CD4-positive, alpha-beta T cell (primary cell): ENCODE measurements at regions of chr15 and their contacts with region 1.

Region 1: GRCh38 chr15:38474155-38474757 is 20.3 kb downstream of the FAM98B start:
- DNase-seq: peak in 10 of 14 experiments; percentile 6 to 85 (median 30)
- ATAC-seq: peak; percentile 100
- H3K4me3 ChIP-seq: no peak overlapping the region
- H3K4me3 Mint-ChIP-seq: no peak overlapping the region
- H3K27ac ChIP-seq: no peak overlapping the region
- H3K27ac Mint-ChIP-seq: peak overlapping the region; percentile 61
- H3K4me1 ChIP-seq: no peaks in the 10 kb centered on the region
- H3K4me1 Mint-ChIP-seq: peaks cover 5% of the 10 kb centered on the region
- H3K27me3 ChIP-seq: no peaks in the 10 kb centered on the region
- H3K27me3 Mint-ChIP-seq: no peaks in the 10 kb centered on the region
- CTCF ChIP-seq: peak; percentile 82

Region 2: GRCh38 chr15:38207621-38208020 is 266.6 kb before region 1 on chr15:
- CTCF ChIA-PET with region 1: no interaction called
- POLR2A ChIA-PET with region 1: no interaction called
- intact Hi-C with region 1: no loop called
- DNase-seq: no peak
- ATAC-seq: no peak
- H3K4me3 ChIP-seq: no peak overlapping the region
- H3K4me3 Mint-ChIP-seq: no peak overlapping the region
- H3K27ac ChIP-seq: no peak overlapping the region
- H3K27ac Mint-ChIP-seq: no peak overlapping the region
- H3K4me1 ChIP-seq: no peaks in the 10 kb centered on the region
- H3K4me1 Mint-ChIP-seq: no peaks in the 10 kb centered on the region
- H3K27me3 ChIP-seq: peaks cover 0 to 4% of the 10 kb centered on the region in 2 experiments
- H3K27me3 Mint-ChIP-seq: peaks cover 56% of the 10 kb centered on the region
- CTCF ChIP-seq: no peak

Region 3: GRCh38 chr15:38853608-38854007 is 379.4 kb after region 1 on chr15:
- CTCF ChIA-PET with region 1: no interaction called
- POLR2A ChIA-PET with region 1: no interaction called
- intact Hi-C with region 1: loop called in 1 of 2 experiments (anchors 10 kb)
- DNase-seq: peak in 13 of 14 experiments; percentile 5 to 48 (median 16)
- ATAC-seq: no peak
- H3K4me3 ChIP-seq: no peak overlapping the region
- H3K4me3 Mint-ChIP-seq: no peak overlapping the region
- H3K27ac ChIP-seq: no peak overlapping the region
- H3K27ac Mint-ChIP-seq: no peak overlapping the region
- H3K4me1 ChIP-seq: no peaks in the 10 kb centered on the region
- H3K4me1 Mint-ChIP-seq: no peaks in the 10 kb centered on the region
- H3K27me3 ChIP-seq: no peaks in the 10 kb centered on the region
- H3K27me3 Mint-ChIP-seq: peaks cover 33% of the 10 kb centered on the region
- CTCF ChIP-seq: no peak

Region 4: DNA sequence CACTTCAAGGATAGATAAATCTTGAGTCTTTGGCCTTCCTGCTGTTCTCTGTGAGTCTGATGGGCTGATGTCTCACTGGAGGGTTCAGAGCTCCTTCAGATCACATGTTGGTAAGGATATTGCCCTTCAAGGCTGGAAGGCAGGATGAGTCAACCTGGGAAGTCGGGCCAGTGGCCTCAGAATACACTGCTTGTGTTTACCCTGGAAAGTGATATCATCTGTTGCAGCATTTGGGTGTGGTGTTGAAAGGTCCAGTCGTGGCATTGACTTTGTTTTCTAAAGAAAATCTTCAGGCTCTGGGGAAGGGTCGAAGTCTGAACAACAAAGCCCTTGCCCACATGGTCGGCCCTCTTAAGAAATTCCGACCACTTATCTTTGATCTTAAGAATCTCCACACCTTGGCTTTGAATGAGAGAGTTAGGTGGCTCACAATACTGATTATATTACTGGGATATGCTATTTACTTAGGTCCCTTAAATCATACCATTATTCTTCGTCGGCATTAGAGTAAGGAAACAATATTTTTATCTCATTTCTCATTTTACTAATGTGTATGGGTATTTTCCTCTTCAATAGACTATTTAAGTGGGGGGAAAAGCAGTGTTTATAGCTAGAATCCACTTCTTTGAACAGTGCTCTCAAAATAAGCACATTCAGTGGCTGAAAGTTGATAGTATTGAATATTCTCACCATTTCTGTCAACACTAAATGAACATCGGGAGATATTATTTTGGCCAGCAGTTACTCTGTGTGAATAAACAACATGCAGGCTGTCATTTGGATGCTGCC is 394.3 kb after region 1 on chr15:
- CTCF ChIA-PET with region 1: no interaction called
- POLR2A ChIA-PET with region 1: no interaction called
- intact Hi-C with region 1: loop called in 1 of 2 experiments (anchors 10 kb)
- DNase-seq: no peak
- ATAC-seq: no peak
- H3K4me3 ChIP-seq: no peak overlapping the region
- H3K4me3 Mint-ChIP-seq: no peak overlapping the region
- H3K27ac ChIP-seq: no peak overlapping the region
- H3K27ac Mint-ChIP-seq: no peak overlapping the region
- H3K4me1 ChIP-seq: no peaks in the 10 kb centered on the region
- H3K4me1 Mint-ChIP-seq: no peaks in the 10 kb centered on the region
- H3K27me3 ChIP-seq: no peaks in the 10 kb centered on the region
- H3K27me3 Mint-ChIP-seq: peaks cover 31% of the 10 kb centered on the region
- CTCF ChIP-seq: no peak

Region 5: DNA sequence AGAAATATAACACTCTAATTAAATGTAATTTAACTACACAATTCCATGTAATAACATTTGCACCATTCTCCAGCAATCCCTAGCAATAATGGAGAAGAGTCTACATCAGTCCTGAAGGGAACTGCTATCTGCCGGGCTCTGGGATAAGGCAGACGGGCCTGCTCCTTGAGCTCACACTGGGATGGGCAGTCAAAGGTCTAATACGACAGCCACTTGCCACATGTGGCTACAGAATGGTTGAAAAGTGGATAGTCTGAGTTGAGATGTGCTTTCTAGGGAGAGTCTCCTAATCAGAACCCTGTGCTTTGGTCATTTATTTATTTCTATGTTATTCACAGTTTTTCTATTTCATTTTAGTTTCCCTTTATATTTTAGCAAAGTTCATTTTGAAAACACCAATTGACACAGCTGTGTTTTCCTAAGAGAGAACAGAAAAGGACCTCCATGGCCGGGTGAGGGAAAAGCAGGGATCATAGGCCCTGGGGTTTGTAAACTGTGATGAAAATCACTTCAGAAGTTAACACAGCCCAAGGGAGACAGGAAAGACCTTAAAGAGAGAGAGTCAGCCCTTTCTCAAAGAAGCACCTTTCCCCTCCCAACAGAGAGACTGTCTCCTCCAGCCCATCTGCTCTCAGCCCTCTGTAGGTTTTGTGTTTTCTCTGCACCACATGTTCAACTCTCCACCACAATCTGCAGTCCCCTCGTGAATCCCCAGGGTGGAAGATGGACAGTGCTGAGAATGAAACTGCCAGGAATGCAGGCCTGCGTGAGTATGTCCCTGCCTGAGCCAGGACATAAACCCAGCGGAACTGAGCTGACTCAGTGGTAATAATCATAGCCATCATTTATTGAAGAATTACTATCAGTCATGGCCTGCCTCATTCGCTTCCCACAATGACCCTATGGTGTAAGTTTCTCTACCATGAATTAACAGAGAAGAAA is 1296.8 kb after region 1 on chr15:
- CTCF ChIA-PET with region 1: no interaction called
- POLR2A ChIA-PET with region 1: no interaction called
- intact Hi-C with region 1: loop called in 1 of 2 experiments (anchors 10 kb)
- DNase-seq: no peak
- ATAC-seq: no peak
- H3K4me3 ChIP-seq: no peak overlapping the region
- H3K4me3 Mint-ChIP-seq: no peak overlapping the region
- H3K27ac ChIP-seq: no peak overlapping the region
- H3K27ac Mint-ChIP-seq: no peak overlapping the region
- H3K4me1 ChIP-seq: peaks cover 9% of the 10 kb centered on the region
- H3K4me1 Mint-ChIP-seq: peaks cover 22% of the 10 kb centered on the region
- H3K27me3 ChIP-seq: no peaks in the 10 kb centered on the region
- H3K27me3 Mint-ChIP-seq: no peaks in the 10 kb centered on the region
- CTCF ChIP-seq: no peak